ENCODE measurements at regions of chr19 and their contacts with region 1.

Region 1: GRCh38 chr19:49443366-49444099 is 2.2 kb upstream of the SLC17A7 start:
- DNase-seq: peak; percentile 97
- ATAC-seq: peak; percentile 91 to 92

Region 2: DNA sequence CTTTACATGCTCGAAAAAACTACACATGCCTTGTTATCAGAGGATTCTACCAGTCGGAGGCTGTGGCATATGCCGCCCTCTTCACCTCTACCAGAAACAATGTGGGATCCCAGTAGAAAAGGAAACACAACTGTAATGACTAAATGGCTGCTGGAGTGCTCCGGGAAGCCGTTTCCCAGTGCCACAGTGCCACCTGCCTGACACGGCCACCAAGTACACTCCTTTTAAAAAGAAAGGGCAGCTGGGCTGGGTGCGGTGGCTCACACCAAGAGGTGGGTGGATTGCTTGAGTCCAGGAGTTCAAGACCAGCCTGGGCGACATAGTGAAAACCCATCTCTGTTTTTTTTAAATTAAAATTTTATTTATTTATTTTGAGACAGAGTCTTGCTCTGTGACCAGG is 218.7 kb before region 1 on chr19:
- intact Hi-C with region 1: loop called in 1 of 2 experiments (anchors 10 kb)
- DNase-seq: peak; percentile 34
- ATAC-seq: peak; percentile 19 to 70

Region 3: DNA sequence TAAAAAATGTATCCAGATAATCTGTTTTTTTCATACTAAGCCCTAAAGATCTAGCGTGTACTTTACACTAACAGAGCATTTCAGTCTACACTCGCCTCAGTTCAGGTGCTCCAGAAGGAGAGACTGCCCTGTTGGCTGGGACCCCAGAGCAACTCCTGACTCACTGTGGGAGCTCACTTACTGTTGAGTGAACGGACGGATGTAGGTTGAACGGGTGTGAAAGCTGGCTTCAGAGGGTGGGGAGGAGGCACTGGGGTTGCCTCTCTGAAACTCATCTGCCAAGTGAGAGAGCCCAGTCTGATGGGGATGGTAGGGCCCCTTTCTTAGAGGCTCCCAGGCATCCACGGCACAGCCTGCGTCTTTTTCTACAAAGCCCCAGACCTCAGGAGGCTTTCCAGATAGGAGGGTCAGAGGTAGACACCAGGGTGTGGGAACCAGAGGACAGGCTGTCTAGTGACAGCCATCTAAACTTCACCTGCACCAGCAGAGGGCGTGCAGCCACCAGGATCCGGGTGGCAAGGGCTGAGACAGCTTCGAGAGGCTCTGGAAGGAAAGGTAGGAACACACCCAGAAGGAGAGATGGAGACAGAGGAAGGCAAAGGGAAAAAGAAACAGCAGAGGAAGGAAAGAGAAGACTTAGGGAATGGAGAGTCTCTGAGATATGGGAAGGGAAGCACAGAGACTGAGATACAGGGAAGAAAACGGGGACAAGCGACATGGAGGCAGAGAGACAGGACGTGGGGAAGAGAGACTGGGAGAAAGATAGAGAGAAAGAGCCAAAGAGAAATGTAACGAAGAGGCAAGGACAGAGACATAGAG is 51.7 kb before region 1 on chr19:
- intact Hi-C with region 1: loop called (anchors 1 to 5 kb)
- DNase-seq: peak; percentile 79
- ATAC-seq: peak; percentile 80 to 85

Region 4: GRCh38 chr19:49655570-49656455 is 212.3 kb after region 1 on chr19:
- intact Hi-C with region 1: no loop called
- DNase-seq: no peak
- ATAC-seq: no peak

Measured in left cardiac atrium (tissue), 4 donors.